WTC11 (cell line): ENCODE measurements at regions of chr13 and their contacts with region 1.

Region 1: GRCh38 chr13:49690992-49691886 is at the start of gene EBPL:
- DNase-seq: peak; percentile 99
- ATAC-seq: peak; percentile 96
- H3K4me3 Mint-ChIP-seq: peak within 1 kb of the TSS; percentile 91
- H3K27ac Mint-ChIP-seq: peak within 1 kb of the TSS; percentile 82
- H3K4me1 Mint-ChIP-seq: peaks cover 37% of the 10 kb centered on the region
- H3K27me3 Mint-ChIP-seq: no peaks in the 10 kb centered on the region; the same call in 1 of the 2 replicates
- CTCF ChIP-seq: no peak
- total RNA-seq, gene EBPL: 92.5 to 137 TPM (median 126 TPM) in 3 replicates

Region 2: GRCh38 chr13:49667773-49668172 is 23.5 kb before region 1 on chr13:
- CTCF ChIA-PET with region 1: no interaction called
- POLR2A ChIA-PET with region 1: no interaction called
- DNase-seq: no peak
- ATAC-seq: no peak
- H3K4me3 Mint-ChIP-seq: no peak overlapping the region
- H3K27ac Mint-ChIP-seq: no peak overlapping the region
- H3K4me1 Mint-ChIP-seq: peaks cover 32% of the 10 kb centered on the region
- H3K27me3 Mint-ChIP-seq: no peaks in the 10 kb centered on the region
- CTCF ChIP-seq: no peak

Region 3: GRCh38 chr13:49792550-49793324 is 101.5 kb after region 1 on chr13 and contains the start of gene KPNA3:
- CTCF ChIA-PET with region 1: interaction called, 5 read pairs
- POLR2A ChIA-PET with region 1: interaction called, 20 read pairs
- DNase-seq: peak; percentile 95
- ATAC-seq: peak; percentile 95
- H3K4me3 Mint-ChIP-seq: peak within 1 kb of the TSS; percentile 96
- H3K27ac Mint-ChIP-seq: peak within 1 kb of the TSS; percentile 99
- H3K4me1 Mint-ChIP-seq: peaks cover 32% of the 10 kb centered on the region
- H3K27me3 Mint-ChIP-seq: no peaks in the 10 kb centered on the region
- CTCF ChIP-seq: no peak
- total RNA-seq, gene KPNA3: 44.2 to 47.6 TPM (median 44.4 TPM) in 3 replicates